Mammary epithelial cell (primary cell): ENCODE measurements at regions of chr2 and their contacts with region 1.

Region 1: GRCh38 chr2:231270221-231271114 is 72.0 kb downstream of the ARMC9 start:
- DNase-seq: no peak
- H3K4me3 ChIP-seq: no peak overlapping the region
- H3K27ac ChIP-seq: no peak overlapping the region
- H3K4me1 ChIP-seq: no peaks in the 10 kb centered on the region
- H3K27me3 ChIP-seq: no peaks in the 10 kb centered on the region
- CTCF ChIP-seq: no peak

Region 2: GRCh38 chr2:231218366-231218765 is 52.1 kb before region 1 on chr2:
- CTCF ChIA-PET with region 1: no interaction called
- dilution Hi-C with region 1: no loop called
- in situ Hi-C with region 1: no loop called
- intact Hi-C with region 1: no loop called
- DNase-seq: no peak
- H3K4me3 ChIP-seq: no peak overlapping the region
- H3K27ac ChIP-seq: no peak overlapping the region
- H3K4me1 ChIP-seq: peaks cover 6% of the 10 kb centered on the region
- H3K27me3 ChIP-seq: no peaks in the 10 kb centered on the region
- CTCF ChIP-seq: no peak

Region 3: DNA sequence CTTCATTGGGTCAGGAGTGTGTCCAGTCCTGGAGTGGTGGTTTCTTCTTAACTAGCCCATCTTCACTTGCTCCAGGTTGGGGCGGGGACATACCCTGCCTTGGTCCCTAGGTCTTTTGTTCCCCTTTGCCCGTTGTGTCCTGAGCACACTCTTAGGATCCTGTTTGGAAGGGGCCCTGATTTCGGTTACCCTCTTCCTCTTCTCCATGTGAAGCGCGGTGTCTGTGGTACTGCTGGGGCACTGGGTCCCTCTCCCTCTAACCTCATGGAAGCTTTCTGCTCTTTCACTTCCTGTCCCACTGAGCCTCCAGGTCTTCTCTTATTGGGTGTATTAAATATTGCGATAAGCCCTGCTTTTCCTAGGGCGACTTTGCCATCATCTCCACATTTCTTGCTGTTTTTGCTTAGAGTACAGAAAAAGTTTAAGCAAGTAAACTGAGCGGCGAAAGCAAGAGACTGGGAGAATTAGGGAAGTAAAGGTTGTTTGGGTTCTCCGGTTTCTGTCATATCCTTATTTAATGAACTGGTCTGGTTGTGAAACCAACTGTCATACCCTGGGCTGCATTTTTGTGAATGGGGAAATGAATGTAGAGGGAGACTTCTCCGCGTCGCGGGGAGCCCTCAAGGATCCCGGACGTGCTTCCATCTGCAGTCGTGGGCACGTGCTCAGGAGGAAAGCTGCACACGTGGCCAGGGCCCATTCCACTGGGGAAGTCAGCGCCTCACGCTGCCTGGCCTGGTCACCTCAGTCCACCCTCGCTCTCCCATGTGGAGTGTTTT is 51.3 kb after region 1 on chr2:
- CTCF ChIA-PET with region 1: no interaction called
- dilution Hi-C with region 1: no loop called
- in situ Hi-C with region 1: no loop called
- intact Hi-C with region 1: no loop called
- DNase-seq: no peak
- H3K4me3 ChIP-seq: no peak overlapping the region
- H3K27ac ChIP-seq: no peak overlapping the region
- H3K4me1 ChIP-seq: no peaks in the 10 kb centered on the region
- H3K27me3 ChIP-seq: no peaks in the 10 kb centered on the region
- CTCF ChIP-seq: no peak

Region 4: GRCh38 chr2:231573698-231574421 is 303.4 kb after region 1 on chr2:
- CTCF ChIA-PET with region 1: no interaction called
- dilution Hi-C with region 1: loop called (anchors 10 kb)
- in situ Hi-C with region 1: no loop called
- intact Hi-C with region 1: no loop called
- DNase-seq: no peak
- H3K4me3 ChIP-seq: no peak overlapping the region
- H3K27ac ChIP-seq: no peak overlapping the region
- H3K4me1 ChIP-seq: no peaks in the 10 kb centered on the region
- H3K27me3 ChIP-seq: no peaks in the 10 kb centered on the region
- CTCF ChIP-seq: no peak